ENCODE measurements at regions of chr10 and their contacts with region 1.

Region 1: GRCh38 chr10:26468700-26469099 is 30.6 kb downstream of the APBB1IP start:
- DNase-seq: peak in 8 of 9 experiments; percentile 28 to 86 (median 69)
- ATAC-seq: peak; percentile 81
- H3K4me3 ChIP-seq: peak overlapping the region in 1 of 2 experiments; percentile 7
- H3K4me3 Mint-ChIP-seq: peak overlapping the region; percentile 72
- H3K27ac ChIP-seq: peak overlapping the region; percentile 6 to 47
- H3K27ac Mint-ChIP-seq: peak overlapping the region; percentile 91
- H3K4me1 ChIP-seq: peaks cover 94% of the 10 kb centered on the region
- H3K4me1 Mint-ChIP-seq: peaks cover 89% of the 10 kb centered on the region
- H3K27me3 ChIP-seq: no peaks in the 10 kb centered on the region
- H3K27me3 Mint-ChIP-seq: no peaks in the 10 kb centered on the region
- CTCF ChIP-seq: no peak

Region 2: DNA sequence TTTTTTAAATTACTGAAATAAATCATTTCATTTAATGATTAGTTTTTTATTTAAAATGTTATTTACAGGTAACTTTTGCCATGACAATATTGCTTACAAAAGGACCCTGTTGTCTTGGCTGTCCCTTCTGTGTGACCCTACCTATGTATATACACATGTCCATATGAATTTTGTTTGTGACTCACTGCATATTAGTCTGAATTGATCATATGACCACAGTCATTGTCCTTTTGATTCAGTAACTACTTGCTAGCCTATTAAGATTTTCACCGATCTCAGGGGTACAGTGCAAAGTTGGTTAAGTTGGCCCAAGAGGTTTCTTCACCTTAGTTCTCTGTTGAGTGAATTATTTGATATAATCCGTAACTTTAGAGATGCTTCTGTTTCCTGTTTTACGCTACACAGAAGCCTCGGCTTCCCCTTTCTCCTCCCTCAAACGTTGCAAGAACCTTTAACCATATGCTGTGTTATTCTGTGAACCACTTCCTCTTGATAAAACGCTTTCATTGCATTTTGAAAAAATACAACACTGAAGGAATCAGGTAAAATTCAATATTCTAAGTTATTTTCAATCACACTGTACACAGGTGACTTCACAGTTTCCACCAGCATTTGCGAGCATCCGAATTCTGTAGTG is 13.3 kb after region 1 on chr10:
- CTCF ChIA-PET with region 1: interaction called, 5 read pairs
- POLR2A ChIA-PET with region 1: interaction called, 11 read pairs
- intact Hi-C with region 1: loop called (anchors 1 to 2 kb)
- DNase-seq: peak in 7 of 9 experiments; percentile 26 to 87 (median 69)
- ATAC-seq: peak; percentile 68
- H3K4me3 ChIP-seq: peak overlapping the region in 1 of 2 experiments; percentile 18
- H3K4me3 Mint-ChIP-seq: peak overlapping the region; percentile 42
- H3K27ac ChIP-seq: peak overlapping the region; percentile 58 to 83
- H3K27ac Mint-ChIP-seq: peak overlapping the region; percentile 88
- H3K4me1 ChIP-seq: peaks cover 84% of the 10 kb centered on the region
- H3K4me1 Mint-ChIP-seq: peaks cover 77% of the 10 kb centered on the region
- H3K27me3 ChIP-seq: no peaks in the 10 kb centered on the region
- H3K27me3 Mint-ChIP-seq: no peaks in the 10 kb centered on the region
- CTCF ChIP-seq: no peak

Region 3: GRCh38 chr10:26486991-26487850 is 18.5 kb after region 1 on chr10:
- CTCF ChIA-PET with region 1: interaction called, 5 read pairs
- POLR2A ChIA-PET with region 1: interaction called, 4 read pairs
- intact Hi-C with region 1: loop called (anchors 1 to 2 kb)
- DNase-seq: peak; percentile 16 to 92 (median 69)
- ATAC-seq: peak; percentile 75
- H3K4me3 ChIP-seq: peak overlapping the region in 1 of 2 experiments; percentile 2
- H3K4me3 Mint-ChIP-seq: peak overlapping the region; percentile 66
- H3K27ac ChIP-seq: peak overlapping the region; percentile 73 to 91
- H3K27ac Mint-ChIP-seq: peak overlapping the region; percentile 97
- H3K4me1 ChIP-seq: peaks cover 66% of the 10 kb centered on the region
- H3K4me1 Mint-ChIP-seq: peaks cover 71% of the 10 kb centered on the region
- H3K27me3 ChIP-seq: no peaks in the 10 kb centered on the region
- H3K27me3 Mint-ChIP-seq: no peaks in the 10 kb centered on the region
- CTCF ChIP-seq: no peak

Region 4: DNA sequence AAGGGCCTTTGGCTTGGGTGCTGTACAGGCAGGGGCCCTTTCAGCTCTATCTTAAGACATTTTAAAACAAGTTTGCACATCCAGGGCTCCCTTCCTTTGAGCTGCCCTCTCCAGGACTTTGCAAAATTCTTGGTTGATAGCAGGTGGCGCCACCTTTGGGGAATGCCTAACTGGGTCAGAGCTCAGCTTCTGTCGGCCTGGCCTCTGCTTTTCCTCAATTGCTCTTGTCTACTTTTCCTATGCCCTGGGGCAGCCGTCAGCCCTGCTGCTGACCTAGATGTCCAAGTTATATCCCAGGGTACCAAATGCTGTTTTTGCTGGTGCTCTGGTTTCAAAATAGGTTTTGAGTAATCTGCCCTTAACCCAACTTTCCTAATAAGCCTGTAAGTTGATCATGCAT is 35.2 kb after region 1 on chr10:
- CTCF ChIA-PET with region 1: interaction called, 3 read pairs
- POLR2A ChIA-PET with region 1: interaction called, 4 read pairs
- intact Hi-C with region 1: loop called (anchors 5 kb)
- DNase-seq: peak in 6 of 9 experiments; percentile 27 to 53 (median 42)
- ATAC-seq: peak; percentile 48
- H3K4me3 ChIP-seq: no peak overlapping the region
- H3K4me3 Mint-ChIP-seq: no peak overlapping the region
- H3K27ac ChIP-seq: no peak overlapping the region
- H3K27ac Mint-ChIP-seq: peak overlapping the region; percentile 43
- H3K4me1 ChIP-seq: no peaks in the 10 kb centered on the region
- H3K4me1 Mint-ChIP-seq: peaks cover 31% of the 10 kb centered on the region
- H3K27me3 ChIP-seq: no peaks in the 10 kb centered on the region
- H3K27me3 Mint-ChIP-seq: no peaks in the 10 kb centered on the region
- CTCF ChIP-seq: peak; percentile 14

Region 5: GRCh38 chr10:26566525-26567350 is 98.0 kb after region 1 on chr10:
- CTCF ChIA-PET with region 1: no interaction called
- POLR2A ChIA-PET with region 1: no interaction called
- intact Hi-C with region 1: no loop called
- DNase-seq: no peak
- ATAC-seq: no peak
- H3K4me3 ChIP-seq: no peak overlapping the region
- H3K4me3 Mint-ChIP-seq: no peak overlapping the region
- H3K27ac ChIP-seq: no peak overlapping the region
- H3K27ac Mint-ChIP-seq: peak overlapping the region; percentile 60
- H3K4me1 ChIP-seq: no peaks in the 10 kb centered on the region
- H3K4me1 Mint-ChIP-seq: no peaks in the 10 kb centered on the region
- H3K27me3 ChIP-seq: no peaks in the 10 kb centered on the region
- H3K27me3 Mint-ChIP-seq: no peaks in the 10 kb centered on the region
- CTCF ChIP-seq: no peak